ENCODE measurements at regions of chr5 and their contacts with region 1.

Region 1: DNA sequence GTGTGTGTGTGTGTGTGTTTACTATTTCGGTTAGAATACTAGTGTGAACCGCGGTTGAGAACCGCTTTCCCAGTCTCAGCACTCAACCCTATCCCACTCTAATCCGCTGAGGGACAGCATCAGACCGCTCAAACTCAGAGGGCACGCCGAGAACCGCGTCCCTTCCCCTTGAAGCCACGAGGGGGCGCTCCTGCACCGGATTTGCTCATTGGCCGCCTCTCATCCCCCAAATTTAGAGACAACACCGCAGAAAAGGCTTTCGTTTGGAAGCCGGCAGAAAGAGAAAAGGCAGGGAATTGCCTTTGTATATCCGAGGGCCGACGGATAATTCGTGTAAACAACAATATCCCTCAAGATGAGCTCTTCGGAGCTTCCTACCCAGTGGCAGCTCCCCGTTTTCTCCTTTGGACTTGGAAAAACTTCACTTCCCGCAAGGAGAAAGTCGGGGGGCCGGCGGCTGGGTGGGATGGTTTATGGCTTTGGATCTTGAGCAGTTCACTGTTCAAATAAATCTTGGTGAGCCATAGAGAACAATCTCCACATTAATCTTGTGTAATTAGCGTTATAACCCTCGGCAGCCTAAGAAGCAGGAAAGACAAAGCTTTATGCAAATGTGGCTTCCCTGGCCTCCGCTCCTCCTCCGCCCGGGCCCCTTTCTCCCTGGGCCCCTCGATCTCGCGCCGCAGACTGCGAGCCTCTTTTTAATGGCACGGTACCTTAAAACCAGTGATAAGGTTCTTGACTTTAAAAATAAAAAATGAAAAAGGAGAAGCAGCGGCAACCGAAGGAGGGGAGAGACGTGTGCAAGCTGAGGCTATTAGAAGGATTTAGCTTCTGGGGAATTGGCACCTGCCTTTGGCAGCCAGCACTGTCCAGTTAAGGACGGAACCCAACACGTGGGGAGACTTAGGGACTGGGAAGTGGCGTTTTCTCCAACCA is 296.8 kb downstream of the PARP8 start:
- DNase-seq: peak in 1 of 2 experiments; percentile 77
- H3K4me3 ChIP-seq: peak overlapping the region; percentile 53
- H3K27ac ChIP-seq: no peak overlapping the region
- H3K4me1 ChIP-seq: no peaks in the 10 kb centered on the region
- H3K27me3 ChIP-seq: 0 out of 2 replicates have a peak, but pooled peaks cover 3% of the 10 kb centered on the region
- CTCF ChIP-seq: peak; percentile 97

Region 2: DNA sequence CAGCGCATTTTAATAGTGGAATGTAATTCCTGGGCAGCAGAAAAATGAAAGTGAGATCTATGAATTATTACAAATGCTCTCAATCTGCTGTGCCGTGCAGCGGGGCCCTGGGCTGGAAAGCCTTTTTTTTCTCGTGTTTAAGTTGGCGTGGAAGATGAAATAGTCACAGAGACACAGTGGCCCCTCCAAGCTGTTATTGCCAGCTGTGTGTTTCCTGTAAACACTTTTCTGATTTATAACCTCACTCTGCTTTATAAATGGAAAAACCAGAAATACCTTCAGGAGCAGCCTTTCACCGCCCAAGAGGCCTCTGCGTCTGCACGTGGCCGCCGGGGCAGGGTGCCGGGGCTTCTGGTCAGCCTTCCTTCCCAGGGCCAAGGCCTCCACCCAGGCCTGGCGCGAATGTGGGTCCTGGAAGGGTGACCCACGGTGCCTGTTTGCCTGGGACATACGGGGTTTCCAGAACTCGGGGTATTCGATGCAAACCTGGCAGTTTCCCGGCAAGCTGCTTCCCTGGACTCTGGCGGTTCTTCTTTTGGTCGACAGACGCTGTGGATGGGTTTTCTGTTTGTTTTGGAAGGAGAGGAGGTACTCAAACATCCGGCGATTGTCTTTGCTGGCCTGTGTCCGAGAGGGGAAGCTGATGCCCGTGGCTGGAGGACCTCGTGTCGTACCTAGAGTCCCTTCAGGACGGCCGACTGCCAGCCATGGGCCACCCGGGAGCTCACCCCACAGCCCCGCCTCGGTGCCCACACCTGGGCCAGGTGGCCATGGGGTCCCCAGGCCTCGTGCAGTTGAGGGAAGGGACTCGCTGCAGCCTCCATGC is 40.0 kb before region 1 on chr5:
- CTCF ChIA-PET with region 1: no interaction called
- POLR2A ChIA-PET with region 1: no interaction called
- intact Hi-C with region 1: no loop called
- DNase-seq: no peak
- H3K4me3 ChIP-seq: no peak overlapping the region
- H3K27ac ChIP-seq: no peak overlapping the region
- H3K4me1 ChIP-seq: no peaks in the 10 kb centered on the region
- H3K27me3 ChIP-seq: no peaks in the 10 kb centered on the region
- CTCF ChIP-seq: no peak; the same call in 1 of the 2 replicates

Region 3: GRCh38 chr5:51013036-51013435 is 49.8 kb after region 1 on chr5:
- CTCF ChIA-PET with region 1: no interaction called
- POLR2A ChIA-PET with region 1: no interaction called
- intact Hi-C with region 1: no loop called
- DNase-seq: no peak
- H3K4me3 ChIP-seq: no peak overlapping the region
- H3K27ac ChIP-seq: no peak overlapping the region
- H3K4me1 ChIP-seq: no peaks in the 10 kb centered on the region
- H3K27me3 ChIP-seq: no peaks in the 10 kb centered on the region
- CTCF ChIP-seq: no peak

Region 4: DNA sequence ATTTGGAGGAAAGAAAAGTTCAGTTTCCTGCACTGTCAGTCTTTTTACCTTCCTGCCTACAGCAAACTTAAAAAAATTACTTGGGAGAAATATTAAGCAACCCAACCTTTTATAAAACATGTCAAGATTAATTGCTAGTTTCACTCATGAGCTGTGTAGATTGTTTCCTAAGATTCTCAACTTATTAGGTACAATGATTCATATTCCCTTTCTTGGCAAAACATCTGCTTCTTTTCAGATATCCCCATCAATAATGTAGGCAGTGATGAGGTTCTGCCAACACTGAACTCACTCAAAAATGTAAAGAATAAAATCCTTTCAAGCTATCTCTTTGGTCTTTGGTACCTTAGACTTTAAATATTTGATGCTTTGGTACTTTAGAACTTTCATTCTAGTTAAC is 476.0 kb after region 1 on chr5:
- CTCF ChIA-PET with region 1: interaction called, 14 read pairs
- POLR2A ChIA-PET with region 1: no interaction called
- intact Hi-C with region 1: no loop called
- DNase-seq: no peak
- H3K4me3 ChIP-seq: no peak overlapping the region
- H3K27ac ChIP-seq: no peak overlapping the region
- H3K4me1 ChIP-seq: no peaks in the 10 kb centered on the region
- H3K27me3 ChIP-seq: no peaks in the 10 kb centered on the region
- CTCF ChIP-seq: no peak

Region 5: DNA sequence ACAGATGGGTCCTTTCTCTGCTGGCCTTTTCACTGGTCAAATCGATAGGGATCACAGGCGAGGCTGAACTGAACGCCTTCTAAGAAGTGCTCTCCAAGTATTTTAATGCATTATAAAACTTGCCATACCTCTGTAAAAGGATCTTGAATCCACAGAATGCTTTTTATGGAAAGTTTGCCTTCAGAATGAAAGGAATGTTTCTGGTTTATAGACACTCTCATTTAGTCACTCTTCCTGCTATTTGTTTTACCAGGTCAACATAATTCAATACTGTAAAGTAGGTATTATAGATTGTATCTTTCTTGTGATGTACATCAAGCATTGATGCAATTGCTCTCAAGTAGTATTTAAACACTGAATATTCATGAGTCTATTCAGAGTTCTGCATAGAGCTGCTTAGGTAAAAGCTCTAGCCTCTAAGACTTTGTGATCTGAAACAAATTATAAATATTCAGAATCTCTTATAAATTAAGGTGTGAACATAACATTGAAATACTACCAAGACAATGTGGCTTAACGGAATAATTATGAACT is 728.4 kb after region 1 on chr5:
- CTCF ChIA-PET with region 1: no interaction called
- POLR2A ChIA-PET with region 1: no interaction called
- intact Hi-C with region 1: no loop called
- DNase-seq: no peak
- H3K4me3 ChIP-seq: no peak overlapping the region
- H3K27ac ChIP-seq: no peak overlapping the region
- H3K4me1 ChIP-seq: no peaks in the 10 kb centered on the region
- H3K27me3 ChIP-seq: no peaks in the 10 kb centered on the region
- CTCF ChIP-seq: no peak

Region 6: DNA sequence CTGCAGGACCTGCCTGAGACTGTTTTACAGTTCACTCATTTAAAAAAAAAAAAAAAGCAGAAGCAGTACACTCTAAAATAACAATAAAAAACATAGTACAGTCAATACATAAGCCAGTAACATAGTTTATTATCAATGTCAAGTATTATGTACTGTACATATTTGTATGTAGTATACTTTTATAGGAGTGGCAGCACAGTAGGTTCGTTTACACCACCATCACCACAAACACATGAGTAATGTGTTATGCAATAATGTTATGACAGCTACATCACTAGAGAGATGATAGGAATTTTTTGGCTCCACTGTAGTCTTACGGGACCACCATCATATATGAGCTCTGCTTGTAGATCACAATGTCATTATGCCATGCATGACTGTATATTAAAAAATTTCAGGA is 882.8 kb after region 1 on chr5:
- CTCF ChIA-PET with region 1: interaction called, 4 read pairs
- POLR2A ChIA-PET with region 1: no interaction called
- intact Hi-C with region 1: loop called (anchors 1 kb)
- DNase-seq: no peak
- H3K4me3 ChIP-seq: no peak overlapping the region
- H3K27ac ChIP-seq: no peak overlapping the region
- H3K4me1 ChIP-seq: no peaks in the 10 kb centered on the region
- H3K27me3 ChIP-seq: no peaks in the 10 kb centered on the region
- CTCF ChIP-seq: no peak

Region 7: GRCh38 chr5:52007230-52007858 is 1044.1 kb after region 1 on chr5:
- CTCF ChIA-PET with region 1: interaction called, 16 read pairs
- POLR2A ChIA-PET with region 1: no interaction called
- intact Hi-C with region 1: loop called (anchors 1 kb)
- DNase-seq: peak in 1 of 2 experiments; percentile 20
- H3K4me3 ChIP-seq: no peak overlapping the region
- H3K27ac ChIP-seq: no peak overlapping the region
- H3K4me1 ChIP-seq: no peaks in the 10 kb centered on the region
- H3K27me3 ChIP-seq: no peaks in the 10 kb centered on the region
- CTCF ChIP-seq: peak; percentile 76

Region 8: DNA sequence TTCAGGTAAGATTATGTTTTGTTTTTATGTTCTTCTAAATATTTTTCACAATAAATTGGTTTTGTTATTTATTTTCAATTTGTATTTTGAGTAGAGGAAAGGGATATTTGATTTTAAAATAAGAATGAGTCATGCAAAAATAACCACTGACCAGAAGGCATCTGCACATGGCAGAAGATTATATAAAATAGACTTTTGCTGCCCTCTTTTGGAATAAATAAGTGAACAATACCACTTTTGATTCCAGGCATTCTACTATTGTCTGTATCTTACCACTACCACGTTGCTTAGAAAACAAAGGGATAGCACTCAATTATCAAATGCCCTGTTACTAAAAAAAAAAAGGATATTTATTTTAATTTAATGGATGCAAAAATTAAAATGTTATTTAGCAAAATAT is 1597.2 kb after region 1 on chr5:
- CTCF ChIA-PET with region 1: no interaction called
- POLR2A ChIA-PET with region 1: no interaction called
- intact Hi-C with region 1: loop called (anchors 5 kb)
- DNase-seq: no peak
- H3K4me3 ChIP-seq: no peak overlapping the region
- H3K27ac ChIP-seq: no peak overlapping the region
- H3K4me1 ChIP-seq: no peaks in the 10 kb centered on the region
- H3K27me3 ChIP-seq: no peaks in the 10 kb centered on the region
- CTCF ChIP-seq: peak; percentile 40; the same call in 1 of the 2 replicates